HCT116 (cell line): ENCODE measurements at regions of chr14 and their contacts with region 1.

Region 1: GRCh38 chr14:100383727-100384158 is 60.6 kb downstream of the SLC25A47 start:
- DNase-seq: no peak
- ATAC-seq: peak; percentile 96
- H3K4me3 ChIP-seq: no peak overlapping the region
- H3K27ac ChIP-seq: no peak overlapping the region; the same call in 1 of the 2 replicates
- H3K4me1 ChIP-seq: peaks cover 2 to 15% of the 10 kb centered on the region in 2 experiments; a peak in 3 of 4 replicates
- H3K27me3 ChIP-seq: no peaks in the 10 kb centered on the region
- CTCF ChIP-seq: peak; percentile 76 to 85 (median 83)
- POLR2A ChIP-seq: no peak
- RAD21 ChIP-seq: peak; percentile 82

Region 2: GRCh38 chr14:100417466-100417865 is 33.7 kb after region 1 on chr14:
- CTCF ChIA-PET with region 1: interaction called, 18 read pairs
- POLR2A ChIA-PET with region 1: no interaction called
- RAD21 ChIA-PET with region 1: interaction called in 1 of 2 experiments, 6 read pairs
- intact Hi-C with region 1: loop called (anchors 2 kb)
- DNase-seq: peak; percentile 63
- ATAC-seq: peak; percentile 97
- H3K4me3 ChIP-seq: no peak overlapping the region
- H3K27ac ChIP-seq: peak overlapping the region; percentile 58
- H3K4me1 ChIP-seq: peaks cover 21 to 26% of the 10 kb centered on the region in 2 experiments
- H3K27me3 ChIP-seq: no peaks in the 10 kb centered on the region
- CTCF ChIP-seq: peak; percentile 71 to 90 (median 84); a peak in 5 of 6 replicates
- POLR2A ChIP-seq: no peak
- RAD21 ChIP-seq: peak; percentile 93

Region 3: GRCh38 chr14:100645192-100645990 is 261.6 kb after region 1 on chr14:
- CTCF ChIA-PET with region 1: interaction called, 108 read pairs
- POLR2A ChIA-PET with region 1: interaction called, 4 read pairs
- RAD21 ChIA-PET with region 1: interaction called, 9 to 12 read pairs
- intact Hi-C with region 1: loop called (anchors 2 kb)
- DNase-seq: peak; percentile 76
- ATAC-seq: peak; percentile 92
- H3K4me3 ChIP-seq: peak overlapping the region in 1 of 2 experiments; percentile 23; a peak in 1 of 4 replicates
- H3K27ac ChIP-seq: peak overlapping the region; percentile 28; the same call in 1 of the 2 replicates
- H3K4me1 ChIP-seq: peaks cover 8 to 26% of the 10 kb centered on the region in 2 experiments
- H3K27me3 ChIP-seq: no peaks in the 10 kb centered on the region
- CTCF ChIP-seq: peak; percentile 76 to 96 (median 79)
- POLR2A ChIP-seq: no peak
- RAD21 ChIP-seq: peak; percentile 98

Region 4: GRCh38 chr14:100662879-100663760 is 279.4 kb after region 1 on chr14:
- CTCF ChIA-PET with region 1: interaction called, 23 read pairs
- POLR2A ChIA-PET with region 1: no interaction called
- RAD21 ChIA-PET with region 1: no interaction called
- intact Hi-C with region 1: no loop called
- DNase-seq: peak; percentile 87
- ATAC-seq: peak; percentile 78
- H3K4me3 ChIP-seq: peak overlapping the region; percentile 28 to 51
- H3K27ac ChIP-seq: peak overlapping the region; percentile 46
- H3K4me1 ChIP-seq: peaks cover 4 to 65% of the 10 kb centered on the region in 2 experiments; a peak in 3 of 4 replicates
- H3K27me3 ChIP-seq: no peaks in the 10 kb centered on the region
- CTCF ChIP-seq: peak in 2 of 3 experiments; percentile 90 to 98; a peak in 4 of 6 replicates
- POLR2A ChIP-seq: no peak
- RAD21 ChIP-seq: no peak

Region 5: DNA sequence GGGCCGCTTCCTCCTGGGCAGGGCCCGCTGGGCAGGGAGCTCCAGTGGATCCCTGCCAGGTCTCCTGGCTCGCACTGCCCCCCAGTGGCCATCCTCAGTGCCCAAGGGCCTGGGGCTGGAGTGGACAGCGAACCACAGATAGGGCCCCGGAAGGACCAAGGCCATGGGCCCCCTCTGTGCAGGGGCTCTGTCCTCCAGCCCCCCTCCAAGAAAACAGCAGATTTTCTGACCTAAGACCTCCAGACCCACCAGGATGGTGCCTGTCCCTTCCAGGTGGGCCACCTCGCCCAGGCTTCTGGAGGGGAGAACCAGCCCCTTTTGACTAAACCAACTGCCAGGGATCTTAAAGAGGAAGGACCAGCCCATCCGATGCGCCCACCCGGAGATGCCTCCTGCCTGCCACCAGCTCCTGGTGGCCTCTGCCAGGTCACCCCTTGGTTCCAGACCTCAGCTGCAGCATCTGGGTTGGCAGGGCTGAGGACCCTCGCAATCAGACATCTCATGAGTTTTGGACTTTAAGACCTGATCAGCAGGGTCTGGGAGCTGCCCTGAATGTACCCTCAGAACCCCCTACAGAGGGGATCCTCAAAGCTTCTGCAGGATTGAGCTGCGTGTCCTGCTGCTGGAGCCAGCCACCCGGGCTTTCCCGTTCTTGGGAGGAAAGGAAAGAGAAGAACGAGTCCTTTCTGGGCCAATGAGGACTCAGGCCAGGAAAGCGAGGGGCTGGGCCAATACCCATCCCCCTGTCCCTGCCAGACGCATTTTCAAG is 851.8 kb after region 1 on chr14:
- CTCF ChIA-PET with region 1: no interaction called
- POLR2A ChIA-PET with region 1: no interaction called
- RAD21 ChIA-PET with region 1: no interaction called
- intact Hi-C with region 1: loop called (anchors 10 kb)
- DNase-seq: peak; percentile 26
- ATAC-seq: peak; percentile 99
- H3K4me3 ChIP-seq: no peak overlapping the region
- H3K27ac ChIP-seq: no peak overlapping the region
- H3K4me1 ChIP-seq: no peaks in the 10 kb centered on the region
- H3K27me3 ChIP-seq: no peaks in the 10 kb centered on the region
- CTCF ChIP-seq: peak; percentile 86 to 92 (median 88)
- POLR2A ChIP-seq: no peak
- RAD21 ChIP-seq: peak; percentile 98